Activated naive CD4-positive, alpha-beta T cell treated with anti-CD3 and anti-CD28 coated beads, Interleukin-2, amount 10 ng/mL, durations not matched to agents 7 days and 5 days (primary cell): ENCODE measurements at regions of chr2 and their contacts with region 1.

Region 1: DNA sequence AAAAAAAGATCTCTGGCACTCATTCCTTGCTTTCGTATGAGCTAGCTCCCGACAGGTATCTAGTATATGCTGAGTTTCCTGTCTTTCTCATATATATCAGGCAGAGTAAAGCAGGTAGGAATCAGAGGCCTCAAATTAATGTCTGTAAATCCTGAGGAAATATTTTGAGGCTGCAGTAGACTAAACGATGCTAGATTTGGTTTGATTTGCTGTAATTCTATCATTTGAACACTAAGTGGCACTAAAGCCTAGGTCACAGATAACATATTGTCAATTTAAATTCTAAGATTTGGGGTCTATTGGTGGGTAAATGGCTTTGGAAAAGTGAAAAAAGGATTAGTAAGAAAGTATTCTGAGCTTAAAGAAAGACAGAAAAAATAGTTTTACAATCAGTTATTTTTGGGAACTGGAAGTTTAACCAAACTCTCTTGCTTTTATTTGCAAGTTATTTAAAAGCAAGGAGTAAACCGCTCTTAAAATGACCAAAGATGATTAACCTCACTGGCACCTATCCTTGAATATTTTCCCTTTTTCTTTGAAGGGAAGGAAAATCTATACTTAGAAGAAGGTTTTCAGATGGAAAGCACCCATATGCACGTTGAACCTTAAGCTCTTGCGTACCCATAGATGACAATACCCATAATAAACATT is 37.6 kb upstream of the SLC4A10 start:
- DNase-seq: no peak
- H3K4me3 Mint-ChIP-seq: no peak overlapping the region
- H3K27ac Mint-ChIP-seq: no peak overlapping the region
- H3K4me1 Mint-ChIP-seq: no peaks in the 10 kb centered on the region
- H3K27me3 Mint-ChIP-seq: peaks cover 11% of the 10 kb centered on the region

Region 2: GRCh38 chr2:161576421-161576820 is 10.2 kb before region 1 on chr2:
- CTCF ChIA-PET with region 1: no interaction called
- DNase-seq: peak; percentile 23
- H3K4me3 Mint-ChIP-seq: no peak overlapping the region
- H3K27ac Mint-ChIP-seq: no peak overlapping the region
- H3K4me1 Mint-ChIP-seq: no peaks in the 10 kb centered on the region
- H3K27me3 Mint-ChIP-seq: peaks cover 15% of the 10 kb centered on the region

Region 3: GRCh38 chr2:161651547-161651946 is 64.9 kb after region 1 on chr2:
- CTCF ChIA-PET with region 1: no interaction called
- DNase-seq: no peak
- H3K4me3 Mint-ChIP-seq: no peak overlapping the region
- H3K27ac Mint-ChIP-seq: no peak overlapping the region
- H3K4me1 Mint-ChIP-seq: no peaks in the 10 kb centered on the region
- H3K27me3 Mint-ChIP-seq: no peaks in the 10 kb centered on the region

Region 4: GRCh38 chr2:162123806-162124758 is 537.4 kb after region 1 on chr2:
- CTCF ChIA-PET with region 1: interaction called, 54 read pairs
- DNase-seq: no peak
- H3K4me3 Mint-ChIP-seq: no peak overlapping the region
- H3K27ac Mint-ChIP-seq: no peak overlapping the region
- H3K4me1 Mint-ChIP-seq: peaks cover 18% of the 10 kb centered on the region
- H3K27me3 Mint-ChIP-seq: no peaks in the 10 kb centered on the region